ENCODE measurements at regions of chr12 and their contacts with region 1.

Region 1: DNA sequence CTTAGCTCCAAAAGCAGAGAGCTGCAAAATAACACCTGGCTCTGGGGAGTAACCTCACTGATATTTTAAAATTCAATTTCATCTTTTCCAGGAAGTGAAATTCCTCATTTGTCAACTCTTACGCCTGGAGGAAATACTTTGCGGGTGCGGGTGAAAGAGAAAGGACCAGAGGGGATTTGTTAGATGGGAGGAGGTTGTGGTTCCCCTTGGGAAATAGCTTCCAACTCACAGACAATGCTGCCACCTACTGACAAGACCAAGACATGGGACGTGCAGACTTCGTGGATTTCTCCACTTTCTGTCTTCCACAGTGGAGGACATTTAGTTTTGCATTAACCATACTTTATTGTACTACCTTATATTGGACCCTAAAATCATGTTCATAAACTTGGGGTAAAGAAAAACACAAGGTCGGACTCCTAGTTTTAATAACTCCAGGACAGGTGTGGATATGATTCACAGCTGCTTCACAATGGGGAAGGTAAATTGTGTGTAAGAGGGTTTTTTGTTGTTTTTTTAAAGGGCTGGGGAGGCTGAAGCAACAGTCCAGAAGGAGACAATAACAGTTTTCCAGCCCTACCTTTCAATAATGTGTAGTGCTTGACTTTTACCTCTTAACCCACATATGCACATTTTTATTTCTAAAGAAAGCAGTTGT is 10.8 kb downstream of the FBXL14 start:
- DNase-seq: peak; percentile 67
- H3K4me3 Mint-ChIP-seq: no peak overlapping the region
- H3K27ac Mint-ChIP-seq: no peak overlapping the region
- H3K4me1 Mint-ChIP-seq: peaks cover 14% of the 10 kb centered on the region
- H3K27me3 Mint-ChIP-seq: no peaks in the 10 kb centered on the region

Region 2: GRCh38 chr12:1605129-1606020 is 21.8 kb after region 1 on chr12:
- CTCF ChIA-PET with region 1: interaction called, 11 read pairs
- POLR2A ChIA-PET with region 1: interaction called, 9 read pairs
- DNase-seq: peak; percentile 60
- H3K4me3 Mint-ChIP-seq: peak overlapping the region; percentile 68
- H3K27ac Mint-ChIP-seq: peak overlapping the region; percentile 5
- H3K4me1 Mint-ChIP-seq: peaks cover 42% of the 10 kb centered on the region
- H3K27me3 Mint-ChIP-seq: no peaks in the 10 kb centered on the region

Region 3: GRCh38 chr12:1698638-1699214 is 115.2 kb after region 1 on chr12:
- CTCF ChIA-PET with region 1: no interaction called
- POLR2A ChIA-PET with region 1: no interaction called
- DNase-seq: no peak
- H3K4me3 Mint-ChIP-seq: no peak overlapping the region
- H3K27ac Mint-ChIP-seq: no peak overlapping the region
- H3K4me1 Mint-ChIP-seq: peaks cover 42% of the 10 kb centered on the region
- H3K27me3 Mint-ChIP-seq: no peaks in the 10 kb centered on the region